GM13977 (cell line): ENCODE measurements at regions of chr5 and their contacts with region 1.

Region 1: GRCh38 chr5:44536650-44537260 is 147.5 kb upstream of the FGF10 start:
- DNase-seq: peak; percentile 27
- CTCF ChIP-seq: peak; percentile 70

Region 2: DNA sequence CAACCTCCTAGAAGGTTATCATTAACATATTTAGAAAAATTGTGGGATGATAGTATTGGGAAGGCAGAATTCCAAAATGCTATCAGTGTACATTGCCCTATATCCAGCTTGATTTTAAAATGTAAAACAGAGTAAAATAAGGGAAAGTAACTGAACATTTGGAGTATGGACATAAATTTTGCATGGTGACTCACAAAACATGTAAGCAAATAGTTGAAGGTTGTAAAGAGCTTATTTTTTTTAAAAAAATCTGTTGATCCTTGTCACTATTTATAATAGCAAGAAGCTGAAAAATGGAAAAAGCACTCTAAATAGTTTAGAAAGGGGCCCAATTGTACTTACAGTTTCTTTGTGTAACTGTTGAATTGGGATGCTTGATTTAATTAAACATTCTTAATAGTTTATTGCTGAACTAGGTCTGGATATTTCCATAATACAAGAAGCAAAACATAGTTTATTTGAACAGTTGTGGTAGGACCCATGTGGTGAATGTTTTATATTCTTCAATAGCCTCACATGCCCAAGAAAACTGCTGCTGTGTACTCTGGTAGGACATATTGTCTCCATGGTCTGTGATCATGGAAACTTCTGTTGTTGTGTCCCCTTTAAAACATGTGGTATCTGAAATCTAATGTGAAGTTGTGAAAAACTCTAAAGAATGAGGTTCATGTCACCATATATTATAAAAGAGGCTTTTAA is 851.4 kb before region 1 on chr5:
- in situ Hi-C with region 1: no loop called
- DNase-seq: no peak
- CTCF ChIP-seq: no peak

Region 3: GRCh38 chr5:44797841-44798240 is 261.1 kb after region 1 on chr5:
- in situ Hi-C with region 1: loop called (anchors 25 kb)
- DNase-seq: no peak
- CTCF ChIP-seq: no peak